ENCODE measurements at regions of chr19 and their contacts with region 1.

Region 1: DNA sequence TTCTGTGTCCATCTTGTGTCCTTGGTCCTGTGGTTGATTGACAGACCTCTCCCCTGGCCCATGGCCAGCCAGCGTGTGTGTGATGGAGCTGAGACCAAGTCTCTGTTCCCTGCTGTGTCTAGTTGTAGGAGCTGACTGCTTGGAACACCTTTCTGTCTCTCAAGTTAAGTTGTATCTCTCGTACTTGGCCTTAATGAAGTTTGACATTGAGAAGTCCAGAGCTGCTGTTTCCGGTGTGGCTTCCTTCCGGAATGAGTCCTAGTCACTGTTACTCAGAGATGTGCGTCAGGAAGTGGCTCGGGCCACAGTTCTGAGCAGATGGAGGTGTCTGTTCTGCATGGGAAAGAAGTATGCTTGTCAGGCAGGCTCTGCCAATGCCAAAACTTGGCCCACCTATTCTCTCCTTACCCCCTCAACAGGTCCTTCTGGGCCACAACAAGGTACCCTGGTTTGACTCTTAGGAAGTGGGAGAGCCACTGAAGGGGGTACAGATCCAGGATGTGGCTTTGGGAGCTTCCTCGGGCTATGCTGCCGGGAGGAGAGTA is 54.3 kb downstream of the GATAD2A start:
- DNase-seq: peak in 8 of 9 donors; percentile 49 to 75 (median 61)
- ATAC-seq: peak; percentile 72
- H3K4me3 ChIP-seq: peak overlapping the region; percentile 55
- H3K4me3 Mint-ChIP-seq: peak overlapping the region; percentile 85 to 92 (median 91)
- H3K27ac ChIP-seq: peak overlapping the region; percentile 82
- H3K27ac Mint-ChIP-seq: peak overlapping the region; percentile 94 to 99 (median 98)
- H3K4me1 ChIP-seq: peaks cover 82% of the 10 kb centered on the region in 2 donors
- H3K4me1 Mint-ChIP-seq: peaks cover 63 to 84% (median 72%) of the 10 kb centered on the region in 7 donors
- H3K27me3 ChIP-seq: no peaks in the 10 kb centered on the region
- H3K27me3 Mint-ChIP-seq: no peaks in the 10 kb centered on the region

Region 2: DNA sequence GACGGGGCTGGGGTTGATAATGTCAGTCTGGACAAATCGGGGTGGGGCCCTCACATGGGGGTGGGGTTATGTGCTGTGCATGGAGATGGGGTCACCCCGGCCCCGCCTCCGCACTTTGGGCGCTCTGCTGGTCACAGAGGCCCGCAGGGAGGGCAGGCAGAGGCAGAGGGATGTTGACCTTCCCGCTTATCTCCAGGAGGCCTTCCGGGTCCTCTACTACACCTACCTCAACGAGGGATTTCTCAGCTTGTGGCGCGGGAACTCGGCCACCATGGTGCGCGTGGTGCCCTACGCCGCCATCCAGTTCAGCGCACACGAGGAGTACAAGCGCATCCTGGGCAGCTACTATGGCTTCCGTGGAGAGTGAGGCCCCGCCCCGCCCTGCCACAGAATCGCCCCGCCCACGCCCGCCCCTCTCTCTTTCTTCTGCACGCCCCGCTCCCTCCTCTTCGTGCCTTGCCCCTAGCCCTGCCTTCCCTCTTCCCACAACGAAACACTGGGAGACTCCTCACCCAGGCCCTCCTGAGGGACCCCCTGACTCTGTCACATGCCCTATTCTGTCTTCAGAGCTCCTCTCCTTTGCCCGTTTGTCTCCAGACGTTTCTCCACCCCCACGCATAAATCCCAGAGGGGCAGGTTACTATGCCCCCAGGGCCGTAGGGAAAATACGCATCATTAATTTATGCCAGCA is 354.3 kb before region 1 on chr19:
- CTCF ChIA-PET with region 1: no interaction called
- POLR2A ChIA-PET with region 1: no interaction called
- intact Hi-C with region 1: no loop called
- DNase-seq: no peak
- ATAC-seq: no peak
- H3K4me3 ChIP-seq: no peak overlapping the region
- H3K4me3 Mint-ChIP-seq: no peak overlapping the region
- H3K27ac ChIP-seq: no peak overlapping the region
- H3K27ac Mint-ChIP-seq: no peak overlapping the region
- H3K4me1 ChIP-seq: no peaks in the 10 kb centered on the region
- H3K4me1 Mint-ChIP-seq: peaks cover 0 to 8% (median 4%) of the 10 kb centered on the region in 7 donors
- H3K27me3 ChIP-seq: no peaks in the 10 kb centered on the region
- H3K27me3 Mint-ChIP-seq: peaks cover 0 to 2% (median 0%) of the 10 kb centered on the region in 5 donors

Region 3: DNA sequence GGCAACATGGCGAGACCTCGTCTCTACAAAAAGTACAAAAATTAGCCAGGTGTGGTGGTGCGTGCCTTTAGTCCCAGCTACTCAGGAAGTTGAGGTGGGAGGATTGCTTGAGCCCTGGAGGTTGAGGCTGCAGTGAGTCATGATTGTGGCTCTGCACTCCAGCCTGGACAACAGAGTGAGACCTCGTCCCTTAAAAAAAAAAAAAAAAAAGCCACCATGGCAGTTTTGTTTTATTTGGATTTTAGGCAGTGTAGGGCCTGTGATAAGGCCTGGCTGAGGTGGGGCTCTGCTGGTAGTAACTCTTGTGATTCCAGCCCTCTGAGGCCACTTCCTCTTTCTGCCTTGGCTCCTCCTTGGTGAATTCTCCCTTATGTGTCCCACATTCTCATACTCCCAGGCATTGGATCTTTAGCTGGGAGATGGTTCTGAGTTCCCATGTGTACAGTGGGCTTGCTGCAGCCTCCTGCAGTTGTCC is 15.1 kb before region 1 on chr19:
- CTCF ChIA-PET with region 1: interaction called, 5 read pairs
- POLR2A ChIA-PET with region 1: interaction called, 5 read pairs
- intact Hi-C with region 1: loop called (anchors 2 kb)
- DNase-seq: no peak
- ATAC-seq: peak; percentile 37
- H3K4me3 ChIP-seq: no peak overlapping the region
- H3K4me3 Mint-ChIP-seq: peak overlapping the region in 8 of 10 donors; percentile 7 to 66 (median 51)
- H3K27ac ChIP-seq: peak overlapping the region; percentile 49
- H3K27ac Mint-ChIP-seq: peak overlapping the region; percentile 38 to 92 (median 83)
- H3K4me1 ChIP-seq: peaks cover 50 to 60% of the 10 kb centered on the region in 2 donors
- H3K4me1 Mint-ChIP-seq: peaks cover 57 to 84% (median 74%) of the 10 kb centered on the region in 7 donors
- H3K27me3 ChIP-seq: no peaks in the 10 kb centered on the region
- H3K27me3 Mint-ChIP-seq: no peaks in the 10 kb centered on the region

Region 4: DNA sequence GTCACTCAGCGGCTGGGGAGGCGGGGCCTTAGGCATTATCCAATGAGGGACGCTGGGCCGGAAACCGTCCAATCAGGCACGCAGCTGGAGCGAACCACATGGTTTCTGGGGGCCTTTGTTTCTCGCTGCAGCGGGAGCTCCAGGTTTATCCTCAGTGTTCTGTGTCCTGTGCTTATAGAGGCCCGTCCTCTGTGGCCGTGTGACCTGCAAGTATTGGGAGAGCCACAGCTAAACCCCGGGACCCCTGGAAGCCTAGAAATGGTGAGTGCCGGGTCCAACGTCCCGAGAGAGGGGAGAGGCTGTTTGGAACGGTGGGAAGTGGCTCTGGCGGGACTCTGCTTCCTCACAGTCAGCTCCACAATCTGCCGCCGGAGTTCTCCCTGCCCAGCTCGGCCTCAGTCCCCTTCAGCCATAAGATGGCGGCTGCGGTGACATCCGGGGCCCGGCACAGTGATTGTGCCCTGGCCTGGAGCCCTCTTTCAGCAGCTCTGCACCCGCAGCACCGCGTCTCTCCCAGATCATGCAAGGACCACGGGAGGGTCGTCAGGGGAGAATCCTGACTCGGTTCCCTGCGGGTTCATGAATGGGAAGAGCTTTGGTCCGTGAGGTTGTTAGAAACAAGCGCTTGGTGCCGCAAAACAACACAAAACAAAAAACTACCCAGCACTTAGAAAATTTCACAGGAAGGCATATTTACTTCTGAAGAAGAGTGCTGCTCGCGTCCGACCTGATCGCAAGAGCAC is 406.1 kb after region 1 on chr19 and contains the start of gene ZNF253:
- CTCF ChIA-PET with region 1: no interaction called
- POLR2A ChIA-PET with region 1: no interaction called
- intact Hi-C with region 1: no loop called
- DNase-seq: peak; percentile 76 to 95 (median 92)
- ATAC-seq: peak; percentile 95
- H3K4me3 ChIP-seq: peak within 1 kb of the TSS; percentile 93
- H3K4me3 Mint-ChIP-seq: peak within 1 kb of the TSS; percentile 98 to 100 (median 100)
- H3K27ac ChIP-seq: peak within 1 kb of the TSS; percentile 86
- H3K27ac Mint-ChIP-seq: peak within 1 kb of the TSS; percentile 96 to 100 (median 99)
- H3K4me1 ChIP-seq: peaks cover 7 to 13% of the 10 kb centered on the region in 2 donors
- H3K4me1 Mint-ChIP-seq: peaks cover 21 to 41% (median 31%) of the 10 kb centered on the region in 7 donors
- H3K27me3 ChIP-seq: no peaks in the 10 kb centered on the region
- H3K27me3 Mint-ChIP-seq: no peaks in the 10 kb centered on the region
- total RNA-seq, gene ZNF253: 9.5 to 33.8 (median 14.8) TPM